ENCODE measurements at regions of chr1 and their contacts with region 1.

Region 1: DNA sequence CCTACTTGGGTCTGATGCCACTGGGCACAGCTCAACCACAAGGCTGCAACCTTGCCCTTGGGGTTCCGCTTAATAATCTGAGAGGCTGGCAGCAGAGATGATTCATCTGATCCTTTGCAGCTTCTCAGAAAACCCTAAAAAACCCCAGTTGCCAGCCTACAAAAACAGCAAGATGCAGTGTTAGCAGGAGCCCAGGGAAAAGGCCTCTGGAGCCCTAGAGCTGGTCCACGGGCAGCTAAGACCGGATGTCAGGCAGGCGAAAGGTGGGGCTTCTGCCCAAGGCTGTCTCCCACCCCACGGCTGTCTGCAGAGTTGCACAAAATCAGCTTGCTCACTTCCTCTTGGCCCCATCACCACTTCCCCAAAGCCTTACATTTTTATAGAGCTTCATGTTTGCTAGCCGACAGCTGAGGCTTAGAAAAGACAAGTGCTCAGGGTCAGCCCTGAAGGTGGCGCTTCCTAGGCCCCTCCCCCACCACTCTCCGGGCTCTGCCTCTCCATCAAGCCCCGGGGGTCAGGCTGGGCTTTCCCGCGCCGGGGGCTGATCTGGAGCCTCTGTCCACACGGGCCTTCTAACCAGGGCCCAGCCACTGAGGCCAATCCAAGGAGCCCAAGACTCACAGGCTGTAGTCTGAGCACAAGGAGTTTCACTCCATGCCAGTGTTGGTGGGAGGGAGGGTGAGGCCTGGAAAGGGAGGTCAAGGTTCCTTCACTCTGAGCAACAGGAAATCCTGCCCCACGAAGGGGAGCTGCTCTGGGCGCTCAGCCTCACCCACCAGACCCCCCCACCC is 4.2 kb upstream of the ADORA3 start:
- DNase-seq: no peak
- H3K4me3 ChIP-seq: peak overlapping the region; percentile 36
- CTCF ChIP-seq: peak; percentile 45

Region 2: DNA sequence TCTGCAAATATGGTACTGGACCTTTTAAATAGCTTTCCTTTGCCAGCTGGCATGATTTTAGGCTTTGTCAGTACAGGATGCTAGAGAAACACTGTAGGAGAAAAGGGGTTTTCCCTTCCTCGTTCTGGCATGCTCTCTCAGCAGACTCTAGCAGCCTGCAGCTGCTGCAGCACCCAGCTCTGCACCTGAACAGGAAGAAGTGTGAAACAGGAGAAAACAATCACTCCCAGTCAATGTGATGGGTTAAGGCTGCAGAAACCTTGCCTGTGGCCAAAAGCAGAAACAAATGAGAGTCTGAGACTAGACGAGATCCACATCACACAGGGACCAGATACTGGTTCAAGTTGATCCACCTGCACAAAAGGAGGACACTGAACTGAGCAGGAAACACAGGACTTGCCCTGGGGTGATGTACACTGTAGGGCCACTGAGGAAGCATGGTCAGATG is 101.3 kb before region 1 on chr1:
- CTCF ChIA-PET with region 1: no interaction called
- POLR2A ChIA-PET with region 1: no interaction called
- DNase-seq: no peak
- H3K4me3 ChIP-seq: no peak overlapping the region
- CTCF ChIP-seq: no peak

Region 3: DNA sequence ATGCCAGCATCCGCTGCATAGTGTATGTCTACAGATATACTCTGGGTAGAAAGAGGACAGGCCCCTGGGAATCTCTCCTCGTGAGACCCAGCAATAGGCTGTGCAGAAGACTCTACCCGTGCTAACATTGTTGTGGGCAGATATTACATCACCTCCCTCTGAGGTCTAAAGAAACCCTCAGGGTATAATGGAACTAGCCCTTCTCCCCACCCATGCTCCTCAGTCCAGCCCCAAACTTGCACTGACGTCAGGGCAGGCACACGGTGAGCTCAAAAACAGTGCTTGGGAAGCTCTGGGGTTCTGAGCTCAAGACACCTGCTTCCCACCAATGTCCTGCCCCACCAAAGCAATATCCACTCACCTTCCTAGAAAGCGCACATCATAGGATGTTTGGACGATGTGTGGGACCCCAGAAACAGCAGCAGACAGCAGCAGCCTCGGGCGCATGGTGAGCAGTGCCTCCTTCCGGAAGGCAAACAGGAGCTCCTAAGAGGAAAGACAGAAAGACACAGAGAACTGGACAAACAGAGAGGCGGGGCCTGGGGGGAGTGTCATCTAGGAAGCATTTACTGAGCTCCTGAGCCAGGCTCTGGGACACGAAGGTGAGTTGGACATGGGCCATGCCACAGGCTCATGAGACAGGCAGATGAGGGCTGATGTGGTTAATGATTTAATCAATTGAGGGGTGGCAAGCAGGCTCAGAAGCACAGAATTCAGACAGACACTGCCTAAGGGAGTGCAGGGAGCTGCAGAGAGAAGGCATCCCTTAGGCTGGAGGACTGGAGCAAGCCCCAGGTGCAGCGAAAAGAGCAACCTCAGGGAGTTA is 84.8 kb before region 1 on chr1:
- CTCF ChIA-PET with region 1: no interaction called
- POLR2A ChIA-PET with region 1: no interaction called
- DNase-seq: no peak
- H3K4me3 ChIP-seq: no peak overlapping the region
- CTCF ChIP-seq: no peak

Region 4: GRCh38 chr1:111453711-111454110 is 53.9 kb before region 1 on chr1:
- CTCF ChIA-PET with region 1: interaction called, 12 read pairs
- POLR2A ChIA-PET with region 1: interaction called, 4 read pairs
- DNase-seq: no peak
- H3K4me3 ChIP-seq: no peak overlapping the region
- CTCF ChIP-seq: no peak

Region 5: GRCh38 chr1:111538343-111539025 is 30.9 kb after region 1 on chr1:
- CTCF ChIA-PET with region 1: interaction called, 17 read pairs
- POLR2A ChIA-PET with region 1: no interaction called
- DNase-seq: peak; percentile 54
- H3K4me3 ChIP-seq: no peak overlapping the region
- CTCF ChIP-seq: no peak

Region 6: GRCh38 chr1:111611986-111612385 is 104.4 kb after region 1 on chr1:
- CTCF ChIA-PET with region 1: interaction called, 12 read pairs
- POLR2A ChIA-PET with region 1: no interaction called
- DNase-seq: no peak
- H3K4me3 ChIP-seq: no peak overlapping the region
- CTCF ChIP-seq: no peak

Region 7: DNA sequence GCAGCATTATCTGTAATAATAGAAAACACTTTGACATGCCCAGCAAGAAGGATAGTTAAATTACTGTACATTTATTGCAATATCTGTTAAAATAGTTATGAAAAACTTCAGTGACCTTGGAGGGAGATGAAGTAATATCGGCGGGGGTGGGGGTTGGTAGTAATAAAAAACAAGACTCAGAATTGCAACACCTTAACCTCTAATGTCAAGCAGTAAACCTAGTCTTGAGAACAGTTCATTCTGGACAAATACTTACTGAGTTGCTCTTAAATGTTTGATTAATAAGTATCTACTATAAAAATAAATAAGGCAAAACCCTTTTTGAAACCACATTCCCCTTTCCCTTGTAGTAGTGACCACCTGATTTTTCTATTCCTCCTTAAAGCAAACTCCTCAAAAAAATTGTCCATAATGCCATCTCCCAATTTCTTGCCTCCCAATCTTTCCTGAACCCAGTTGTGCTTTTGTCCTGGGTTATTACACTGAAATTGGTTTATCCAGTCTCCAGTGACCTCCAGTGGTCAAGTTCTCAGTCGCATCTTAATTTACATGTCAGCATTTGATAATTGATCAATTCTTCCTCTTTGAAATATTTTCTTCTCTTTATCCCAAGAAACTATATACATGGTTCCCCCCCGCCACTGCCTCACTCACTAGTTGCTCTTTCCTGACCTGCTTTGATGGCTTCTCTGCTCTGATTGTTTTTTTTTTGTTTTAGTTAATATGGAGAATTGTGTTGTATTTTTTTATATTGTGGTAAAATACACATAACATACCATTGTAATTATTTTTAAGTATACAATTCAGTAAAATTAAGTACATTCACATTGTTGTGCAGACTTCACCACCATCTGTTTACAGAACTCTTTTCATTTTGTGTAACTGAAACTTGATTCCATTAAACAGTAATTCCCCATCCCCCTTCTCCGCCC is 148.7 kb after region 1 on chr1:
- CTCF ChIA-PET with region 1: interaction called, 60 read pairs
- POLR2A ChIA-PET with region 1: no interaction called
- DNase-seq: no peak
- H3K4me3 ChIP-seq: no peak overlapping the region
- CTCF ChIP-seq: peak; percentile 37

Region 8: DNA sequence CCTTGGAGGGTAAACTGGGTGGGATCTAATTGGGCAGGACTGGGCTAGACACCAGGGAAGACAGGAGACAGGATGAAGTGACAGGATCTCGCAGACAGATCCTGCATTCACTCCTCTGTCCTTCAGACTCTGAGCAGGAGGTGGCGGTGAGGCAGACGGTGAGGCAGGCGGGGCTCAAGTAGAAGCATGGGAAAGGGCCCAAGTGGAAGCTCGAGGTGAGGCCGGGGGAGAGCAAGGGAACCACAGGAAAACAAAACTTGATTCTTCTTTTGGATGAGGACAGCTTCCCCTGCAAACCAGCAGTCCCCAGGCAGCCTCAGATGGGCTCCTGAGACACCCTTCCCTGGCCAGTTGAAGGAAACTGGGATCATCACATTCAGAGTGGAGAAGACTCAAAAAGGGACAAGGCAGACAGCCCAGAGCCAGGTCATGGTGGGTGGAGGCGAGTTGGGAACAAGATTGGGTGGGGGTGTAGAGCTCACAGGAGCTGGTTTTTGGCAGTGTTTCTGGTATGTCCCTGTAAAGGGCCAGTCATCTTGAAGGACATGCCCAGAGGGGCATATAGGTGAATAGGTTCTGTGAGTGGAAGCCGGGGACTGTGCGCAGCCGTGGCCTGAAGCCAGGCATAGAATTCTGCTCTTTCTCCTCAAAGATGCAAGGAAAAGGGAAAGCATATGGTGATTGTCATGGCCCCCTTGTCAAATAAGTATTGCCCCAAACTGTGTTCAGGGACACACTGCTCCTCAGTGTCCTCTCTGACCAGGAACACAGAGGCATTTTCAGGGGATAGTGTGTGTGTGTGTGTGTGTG is 213.6 kb after region 1 on chr1:
- CTCF ChIA-PET with region 1: interaction called, 48 read pairs
- POLR2A ChIA-PET with region 1: no interaction called
- DNase-seq: no peak
- H3K4me3 ChIP-seq: no peak overlapping the region
- CTCF ChIP-seq: no peak

Region 9: DNA sequence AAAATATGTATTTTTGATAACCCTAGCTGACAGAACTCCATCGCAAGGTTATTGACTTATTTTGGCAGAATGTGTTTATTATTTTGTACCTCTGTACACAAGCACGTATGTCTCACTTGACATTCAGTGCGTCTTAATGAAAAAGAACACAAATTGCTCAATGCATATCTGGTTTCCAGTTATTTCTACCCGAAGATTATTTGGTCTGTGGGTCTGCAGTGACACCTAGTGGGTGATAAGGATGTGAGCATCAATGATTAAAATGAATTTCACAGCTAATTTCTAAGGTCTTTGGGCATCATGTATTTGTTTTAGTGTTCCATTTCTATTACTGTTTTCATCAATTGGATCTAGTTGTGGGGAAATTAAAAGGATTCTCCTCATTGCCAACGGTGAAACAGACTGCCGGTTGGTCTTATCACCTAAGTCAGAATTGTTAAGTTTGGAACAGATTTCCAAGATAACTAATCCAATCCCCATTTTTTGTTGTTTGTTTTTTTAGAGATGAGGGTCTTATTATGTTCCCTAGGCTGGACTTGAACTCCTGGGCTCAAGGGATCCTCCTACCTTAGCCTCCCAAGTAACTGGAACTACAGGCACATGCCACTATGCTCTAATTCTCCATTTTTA is 262.0 kb after region 1 on chr1:
- CTCF ChIA-PET with region 1: interaction called, 78 read pairs
- POLR2A ChIA-PET with region 1: no interaction called
- DNase-seq: no peak
- H3K4me3 ChIP-seq: no peak overlapping the region
- CTCF ChIP-seq: peak; percentile 58

Measured in AG04449 (cell line).